Activated CD4-positive, alpha-beta T cell treated with anti-CD3 and anti-CD28 coated beads, Interleukin-2, amount 10 ng/mL, durations not matched to agents 24 days and 14 days (primary cell): ENCODE measurements at regions of chr3 and their contacts with region 1.

Region 1: GRCh38 chr3:141452036-141452435 is 34.8 kb upstream of the RASA2 start:
- DNase-seq: peak; percentile 86
- H3K4me3 Mint-ChIP-seq: no peak overlapping the region
- H3K27ac Mint-ChIP-seq: no peak overlapping the region
- H3K4me1 Mint-ChIP-seq: peaks cover 6% of the 10 kb centered on the region
- H3K27me3 Mint-ChIP-seq: no peaks in the 10 kb centered on the region

Region 2: GRCh38 chr3:141146979-141147470 is 305.0 kb before region 1 on chr3:
- intact Hi-C with region 1: no loop called
- DNase-seq: no peak
- H3K4me3 Mint-ChIP-seq: no peak overlapping the region
- H3K27ac Mint-ChIP-seq: no peak overlapping the region
- H3K4me1 Mint-ChIP-seq: no peaks in the 10 kb centered on the region
- H3K27me3 Mint-ChIP-seq: no peaks in the 10 kb centered on the region

Region 3: GRCh38 chr3:141303481-141304223 is 148.4 kb before region 1 on chr3:
- intact Hi-C with region 1: loop called (anchors 1 kb)
- DNase-seq: peak; percentile 91
- H3K4me3 Mint-ChIP-seq: no peak overlapping the region
- H3K27ac Mint-ChIP-seq: no peak overlapping the region
- H3K4me1 Mint-ChIP-seq: peaks cover 35% of the 10 kb centered on the region
- H3K27me3 Mint-ChIP-seq: peaks cover 1% of the 10 kb centered on the region

Region 4: DNA sequence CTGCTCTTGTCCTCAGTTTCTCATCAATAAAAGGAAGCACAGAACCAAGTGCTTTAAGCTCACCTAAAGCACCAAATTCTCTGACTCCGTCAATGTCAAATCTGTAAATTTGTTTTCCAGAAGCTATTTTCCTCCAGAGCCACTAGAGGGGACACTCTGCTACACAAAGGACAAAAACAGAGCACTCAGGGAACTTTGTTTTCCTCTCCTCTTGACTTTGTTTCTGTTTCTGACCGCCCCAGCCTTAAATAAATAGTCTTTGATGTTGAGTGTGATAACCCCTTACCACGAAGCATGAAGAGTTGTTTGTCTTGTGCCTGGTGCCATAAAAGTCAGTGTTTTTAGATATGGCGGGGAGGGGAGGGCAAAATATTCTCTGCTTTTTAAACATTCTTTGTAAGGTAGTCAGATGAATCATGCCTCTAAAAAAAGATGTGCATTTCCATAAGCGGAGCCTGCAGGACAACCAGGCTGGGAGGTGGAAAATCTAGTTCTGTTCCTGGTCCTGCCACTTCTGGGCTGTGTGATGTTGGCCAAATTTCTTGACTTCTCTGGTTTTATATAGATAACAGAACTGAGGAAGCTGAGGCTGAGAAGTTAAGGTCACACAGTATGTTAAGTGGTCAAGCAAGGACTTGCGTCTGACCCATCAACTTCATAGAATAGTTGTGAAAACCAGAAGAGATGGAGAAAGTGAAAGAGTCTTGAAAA is 91.0 kb before region 1 on chr3:
- intact Hi-C with region 1: loop called (anchors 1 kb)
- DNase-seq: peak; percentile 73
- H3K4me3 Mint-ChIP-seq: peak overlapping the region; percentile 31
- H3K27ac Mint-ChIP-seq: no peak overlapping the region
- H3K4me1 Mint-ChIP-seq: peaks cover 10% of the 10 kb centered on the region
- H3K27me3 Mint-ChIP-seq: peaks cover 11% of the 10 kb centered on the region